WTC11 (cell line): ENCODE measurements at regions of chr11 and their contacts with region 1.

Region 1: GRCh38 chr11:1505480-1505879 is 18.9 kb upstream of the MOB2 start:
- DNase-seq: peak; percentile 51
- ATAC-seq: peak; percentile 87
- H3K4me3 Mint-ChIP-seq: no peak overlapping the region
- H3K27ac Mint-ChIP-seq: no peak overlapping the region
- H3K4me1 Mint-ChIP-seq: peaks cover 8% of the 10 kb centered on the region
- H3K27me3 Mint-ChIP-seq: no peaks in the 10 kb centered on the region
- CTCF ChIP-seq: no peak

Region 2: DNA sequence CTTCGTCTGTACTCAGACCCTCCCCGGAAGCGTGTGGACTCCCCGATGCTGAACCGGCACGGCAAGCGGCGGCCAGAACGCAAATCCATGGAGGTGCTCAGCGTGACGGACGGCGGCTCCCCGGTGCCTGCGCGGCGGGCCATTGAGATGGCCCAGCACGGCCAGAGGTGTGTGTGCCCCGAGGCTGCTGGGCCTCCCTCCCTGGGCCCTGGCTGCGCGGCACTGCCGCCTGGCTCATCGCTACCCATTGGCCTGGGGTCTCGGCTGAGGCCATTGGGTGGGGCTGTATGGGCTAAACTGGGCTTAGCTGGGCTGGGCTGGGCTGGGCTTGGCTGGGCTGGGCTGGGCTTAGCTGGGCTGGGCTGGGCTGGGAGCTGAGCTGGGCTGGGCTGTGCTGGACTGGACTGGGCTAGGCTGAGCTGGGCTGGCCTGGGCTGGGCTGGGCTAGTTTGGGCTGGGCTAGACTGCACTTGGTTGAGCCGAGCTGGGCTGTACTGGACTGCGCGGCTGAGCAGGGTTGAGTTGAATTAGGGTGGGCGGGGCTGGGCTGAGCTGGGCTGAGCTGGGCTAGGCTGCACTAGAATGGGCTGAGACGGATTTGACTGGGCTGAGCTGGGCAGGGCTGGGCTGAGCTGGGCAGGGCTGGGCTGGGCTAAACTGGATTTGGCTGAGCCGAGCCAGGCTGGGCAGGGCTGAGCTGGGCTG is 59.6 kb before region 1 on chr11:
- CTCF ChIA-PET with region 1: no interaction called
- POLR2A ChIA-PET with region 1: no interaction called
- DNase-seq: no peak
- ATAC-seq: no peak
- H3K4me3 Mint-ChIP-seq: no peak overlapping the region
- H3K27ac Mint-ChIP-seq: no peak overlapping the region
- H3K4me1 Mint-ChIP-seq: no peaks in the 10 kb centered on the region
- H3K27me3 Mint-ChIP-seq: no peaks in the 10 kb centered on the region
- CTCF ChIP-seq: no peak

Region 3: GRCh38 chr11:1482581-1483444 is 22.7 kb before region 1 on chr11:
- CTCF ChIA-PET with region 1: interaction called, 16 read pairs
- POLR2A ChIA-PET with region 1: no interaction called
- DNase-seq: peak; percentile 42
- ATAC-seq: no peak
- H3K4me3 Mint-ChIP-seq: no peak overlapping the region
- H3K27ac Mint-ChIP-seq: no peak overlapping the region
- H3K4me1 Mint-ChIP-seq: 0 out of 2 replicates have a peak, but pooled peaks cover 2% of the 10 kb centered on the region
- H3K27me3 Mint-ChIP-seq: no peaks in the 10 kb centered on the region
- CTCF ChIP-seq: no peak

Region 4: DNA sequence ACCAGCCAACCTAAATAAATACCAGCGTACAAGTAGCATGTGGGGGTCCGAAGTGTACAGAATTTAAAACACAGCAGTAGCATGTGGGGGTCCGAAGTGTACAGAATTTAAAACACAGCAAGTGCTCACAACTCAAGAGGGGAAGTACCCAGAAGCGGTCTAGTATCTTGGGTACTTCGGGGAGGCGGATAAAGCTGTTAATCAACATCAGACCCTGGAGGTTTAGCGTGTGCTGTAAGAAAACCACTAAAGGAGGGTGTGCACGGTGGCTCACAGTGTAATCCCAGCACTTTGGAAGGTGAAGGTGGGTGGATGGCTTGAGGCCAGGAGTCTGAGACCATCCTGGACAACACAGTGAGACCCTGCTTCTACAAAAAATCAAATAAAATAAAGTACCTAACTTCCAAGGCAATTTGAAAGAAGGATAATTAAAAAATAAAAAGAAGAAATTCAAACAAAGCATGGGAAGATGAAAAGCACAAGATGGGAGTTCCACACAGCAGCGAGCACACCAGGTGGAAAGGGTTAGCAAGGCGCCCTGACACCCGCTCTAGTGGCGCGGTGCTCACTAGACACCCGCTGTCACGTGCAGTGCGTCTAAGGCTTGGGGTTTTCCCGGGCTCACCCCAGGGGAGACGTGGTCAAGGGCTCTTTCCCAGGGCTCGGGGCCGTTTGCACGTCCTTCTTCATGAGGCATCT is 16.1 kb after region 1 on chr11:
- CTCF ChIA-PET with region 1: interaction called, 12 read pairs
- POLR2A ChIA-PET with region 1: no interaction called
- DNase-seq: no peak
- ATAC-seq: no peak
- H3K4me3 Mint-ChIP-seq: no peak overlapping the region
- H3K27ac Mint-ChIP-seq: no peak overlapping the region; the same call in 1 of the 2 replicates
- H3K4me1 Mint-ChIP-seq: peaks cover 9% of the 10 kb centered on the region
- H3K27me3 Mint-ChIP-seq: no peaks in the 10 kb centered on the region
- CTCF ChIP-seq: no peak